ENCODE measurements at regions of chr6 and their contacts with region 1.

Region 1: DNA sequence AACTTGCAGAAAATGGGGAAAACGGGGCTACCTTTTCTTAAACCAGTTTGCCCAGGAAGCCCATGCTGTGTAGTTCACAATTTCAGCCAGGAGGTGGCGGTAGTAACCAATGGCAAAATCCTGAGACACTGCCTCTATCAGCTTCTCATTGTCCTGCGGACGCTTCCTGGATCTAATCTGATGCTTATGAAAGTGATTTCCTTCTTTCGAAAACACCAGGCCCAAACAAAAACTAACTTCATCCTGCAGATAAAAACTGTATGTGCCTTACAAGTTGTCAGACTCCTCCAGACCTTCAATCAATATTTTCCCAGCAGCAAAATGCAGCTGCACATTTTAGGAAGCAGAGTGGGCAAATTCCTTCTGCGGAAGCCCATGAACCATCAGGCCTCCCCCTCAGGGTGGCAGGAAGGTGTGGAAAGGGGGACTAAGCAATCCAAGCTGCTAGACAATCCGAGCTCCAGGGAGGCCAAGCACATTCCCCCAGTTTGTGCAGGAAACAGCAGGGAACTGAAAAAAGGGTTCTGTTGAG is 88.5 kb downstream of the LY86 start:
- DNase-seq: peak; percentile 91
- H3K4me3 ChIP-seq: no peak overlapping the region
- H3K27ac ChIP-seq: peak overlapping the region; percentile 44
- H3K4me1 ChIP-seq: peaks cover 17% of the 10 kb centered on the region
- H3K27me3 ChIP-seq: peaks cover 2 to 7% of the 10 kb centered on the region in 2 experiments
- CTCF ChIP-seq: peak; percentile 85 to 90
- POLR2A ChIP-seq: no peak

Region 2: DNA sequence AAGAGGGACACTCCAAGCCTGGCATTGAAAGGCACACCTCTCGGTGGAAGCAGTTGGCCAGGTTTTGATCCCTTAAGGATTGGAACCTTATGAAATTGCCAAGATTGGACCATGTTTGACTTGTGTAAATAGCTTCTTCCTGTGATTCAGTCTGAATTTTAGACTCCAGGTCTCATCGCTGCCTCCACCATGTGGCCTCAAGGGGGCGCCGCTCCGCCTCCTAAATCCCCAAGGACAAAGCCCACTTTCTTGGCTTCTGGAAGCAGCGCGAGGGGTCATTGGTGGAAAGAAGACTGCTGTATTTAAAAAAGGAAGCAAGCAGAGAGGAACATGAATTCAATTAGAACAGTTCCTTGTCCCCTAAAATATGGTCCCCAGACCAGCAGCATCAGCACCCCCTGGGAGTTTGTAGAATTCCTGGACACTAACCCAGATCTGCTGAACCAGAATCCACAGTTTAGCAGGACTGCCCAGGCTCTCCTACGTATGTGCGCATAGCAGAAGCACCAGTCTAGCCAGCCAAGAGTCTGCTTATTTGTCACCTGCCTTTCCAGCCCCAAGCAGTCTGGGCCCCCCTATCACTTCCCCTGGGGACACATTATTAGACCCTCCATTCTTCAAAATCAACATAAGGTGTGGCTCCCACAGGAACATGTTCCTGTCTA is 20.0 kb after region 1 on chr6:
- CTCF ChIA-PET with region 1: interaction called, 66 read pairs
- POLR2A ChIA-PET with region 1: interaction called, 4 read pairs
- dilution Hi-C with region 1: no loop called
- intact Hi-C with region 1: loop called (anchors 1 kb)
- DNase-seq: peak; percentile 91
- H3K4me3 ChIP-seq: no peak overlapping the region
- H3K27ac ChIP-seq: peak overlapping the region; percentile 20
- H3K4me1 ChIP-seq: peaks cover 12% of the 10 kb centered on the region
- H3K27me3 ChIP-seq: no peaks in the 10 kb centered on the region
- CTCF ChIP-seq: peak; percentile 90 to 96
- POLR2A ChIP-seq: no peak

Region 3: GRCh38 chr6:6758915-6759654 is 82.1 kb after region 1 on chr6:
- CTCF ChIA-PET with region 1: interaction called, 12 read pairs
- POLR2A ChIA-PET with region 1: no interaction called
- dilution Hi-C with region 1: no loop called
- intact Hi-C with region 1: no loop called
- DNase-seq: peak; percentile 64
- H3K4me3 ChIP-seq: no peak overlapping the region
- H3K27ac ChIP-seq: no peak overlapping the region
- H3K4me1 ChIP-seq: no peaks in the 10 kb centered on the region
- H3K27me3 ChIP-seq: peaks cover 0 to 4% of the 10 kb centered on the region in 2 experiments
- CTCF ChIP-seq: peak; percentile 40 to 45
- POLR2A ChIP-seq: no peak

Region 4: DNA sequence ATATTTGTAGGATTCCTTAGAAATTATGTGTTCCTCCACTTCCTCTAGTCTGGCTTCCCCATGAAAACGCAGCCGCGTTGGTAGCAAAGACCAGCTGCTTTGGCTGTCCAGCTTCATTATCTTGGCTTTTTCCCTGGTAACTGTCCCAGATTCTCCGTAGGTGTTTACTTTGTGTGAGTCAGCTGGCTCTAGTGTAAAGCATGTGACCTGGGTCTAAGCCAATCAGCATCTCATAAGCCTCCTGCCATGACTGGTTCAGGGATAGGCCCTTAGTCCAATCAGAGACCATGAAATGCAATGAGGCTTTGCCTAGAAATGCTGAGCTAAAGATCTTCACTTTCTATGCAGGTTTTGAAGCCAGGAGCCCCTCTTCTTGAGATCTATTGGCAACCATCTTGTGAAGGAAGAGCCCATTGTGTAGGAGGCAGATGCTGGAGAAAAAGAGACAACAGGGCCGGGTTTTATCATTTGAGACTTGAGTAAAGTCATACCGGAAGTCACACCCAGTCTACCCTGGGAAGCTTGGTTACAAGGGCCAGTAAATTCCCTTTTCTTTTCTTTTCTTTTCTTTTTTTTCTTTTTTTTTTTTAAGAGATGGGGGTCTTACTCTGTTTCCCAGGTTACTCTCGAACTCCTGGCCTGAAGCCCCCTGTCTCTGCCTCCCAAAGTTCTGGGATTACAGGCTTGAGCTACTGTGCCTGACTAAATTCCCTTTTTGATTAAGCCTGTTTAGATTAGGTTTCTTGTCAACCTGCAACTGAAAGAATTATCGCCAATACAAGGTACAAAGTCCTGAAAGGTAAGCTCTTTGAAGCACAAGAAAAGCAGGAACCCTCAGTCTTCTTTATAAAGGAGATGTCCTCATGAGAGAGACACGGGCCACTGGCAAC is 174.3 kb after region 1 on chr6:
- CTCF ChIA-PET with region 1: interaction called, 3 read pairs
- POLR2A ChIA-PET with region 1: no interaction called
- dilution Hi-C with region 1: no loop called
- intact Hi-C with region 1: loop called (anchors 5 kb)
- DNase-seq: peak; percentile 92
- H3K4me3 ChIP-seq: no peak overlapping the region
- H3K27ac ChIP-seq: no peak overlapping the region
- H3K4me1 ChIP-seq: no peaks in the 10 kb centered on the region
- H3K27me3 ChIP-seq: no peaks in the 10 kb centered on the region
- CTCF ChIP-seq: no peak
- POLR2A ChIP-seq: no peak

Region 5: GRCh38 chr6:7238900-7239589 is 562.1 kb after region 1 on chr6:
- CTCF ChIA-PET with region 1: interaction called, 46 read pairs
- POLR2A ChIA-PET with region 1: no interaction called
- dilution Hi-C with region 1: no loop called
- intact Hi-C with region 1: loop called (anchors 1 kb)
- DNase-seq: peak; percentile 66
- H3K4me3 ChIP-seq: no peak overlapping the region
- H3K27ac ChIP-seq: no peak overlapping the region
- H3K4me1 ChIP-seq: no peaks in the 10 kb centered on the region
- H3K27me3 ChIP-seq: no peaks in the 10 kb centered on the region
- CTCF ChIP-seq: peak; percentile 79 to 83
- POLR2A ChIP-seq: no peak

Region 6: DNA sequence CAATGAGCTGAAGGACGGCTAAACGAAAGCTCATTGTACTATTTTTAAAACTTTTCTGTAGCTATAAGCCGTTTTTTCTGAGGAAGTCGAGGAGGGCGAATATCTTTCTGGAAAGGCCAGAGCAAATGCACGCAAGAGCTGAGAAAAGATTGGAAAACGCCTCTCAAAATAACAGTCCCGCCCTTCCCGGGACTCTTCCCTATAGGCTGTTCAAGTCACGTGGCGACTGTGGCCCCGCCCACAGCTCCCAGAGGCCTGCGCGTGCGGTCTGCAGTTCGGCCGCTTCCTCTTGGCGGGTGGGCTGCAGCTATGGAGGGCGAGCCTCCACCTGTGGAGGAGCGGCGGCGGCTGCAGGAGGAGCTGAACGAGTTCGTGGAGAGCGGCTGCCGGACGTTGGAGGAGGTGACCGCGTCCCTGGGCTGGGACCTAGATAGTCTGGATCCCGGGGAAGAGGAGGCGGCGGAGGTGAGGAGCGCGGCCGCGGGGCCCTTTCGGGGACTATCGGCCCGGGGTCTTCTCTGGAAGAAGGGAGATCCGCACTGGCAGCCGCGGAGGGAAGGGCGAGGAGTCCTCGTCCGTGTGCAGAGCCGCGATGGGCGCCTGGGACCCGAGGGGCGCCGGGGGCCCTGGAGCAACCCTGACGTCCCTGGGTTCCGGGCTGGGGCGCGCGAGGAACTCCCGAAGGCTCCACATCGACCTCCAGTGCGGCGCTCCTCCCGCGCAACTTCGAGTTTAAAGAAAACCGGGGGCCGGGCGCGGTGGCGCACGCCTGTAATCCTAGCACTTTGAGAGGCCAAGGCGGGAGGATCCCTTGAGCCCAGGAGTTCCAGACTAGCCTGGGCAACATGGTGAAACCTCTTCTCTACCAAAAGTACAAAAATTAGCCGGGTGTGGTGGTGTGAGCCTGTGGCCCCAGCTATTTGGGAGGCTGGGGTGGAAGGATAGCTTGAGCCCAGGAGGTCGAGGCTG is 913.3 kb after region 1 on chr6 and contains the start of gene SNRNP48:
- CTCF ChIA-PET with region 1: no interaction called
- POLR2A ChIA-PET with region 1: no interaction called
- dilution Hi-C with region 1: no loop called
- intact Hi-C with region 1: loop called (anchors 5 kb)
- DNase-seq: peak; percentile 96
- H3K4me3 ChIP-seq: peak within 1 kb of the TSS; percentile 59 to 89 (median 87)
- H3K27ac ChIP-seq: peak within 1 kb of the TSS; percentile 3
- H3K4me1 ChIP-seq: peaks cover 11% of the 10 kb centered on the region
- H3K27me3 ChIP-seq: peaks cover 0 to 6% of the 10 kb centered on the region in 2 experiments
- CTCF ChIP-seq: no peak
- POLR2A ChIP-seq: peak; percentile 70
- total RNA-seq, gene SNRNP48: 12.8 and 13.2 TPM in 2 replicates